Activated CD8-positive, alpha-beta T cell treated with anti-CD3 and anti-CD28 coated beads for 36 hours (primary cell): ENCODE measurements at regions of chr2 and their contacts with region 1.

Region 1: DNA sequence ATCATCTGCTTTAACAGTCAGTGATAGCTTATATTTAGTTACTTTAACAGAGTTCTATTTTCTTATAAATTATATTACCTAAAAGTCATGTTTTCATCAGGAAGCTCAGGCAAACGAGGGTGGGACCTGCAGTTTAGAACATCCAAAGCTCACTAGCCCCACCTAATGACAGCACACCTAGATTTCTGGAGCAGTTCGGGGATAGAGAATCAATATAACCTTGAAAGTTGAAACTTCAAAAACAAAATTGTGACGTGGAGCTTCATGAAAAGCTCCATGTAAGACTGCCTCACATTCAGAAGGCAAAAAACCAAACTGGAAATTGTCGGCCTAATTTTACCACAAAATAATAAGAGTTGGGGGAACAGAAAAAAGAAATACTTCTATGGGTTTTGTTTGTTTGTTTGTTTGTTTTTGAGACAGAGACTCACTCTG is 185.9 kb upstream of the CCDC150 start:
- DNase-seq: peak; percentile 68
- ATAC-seq: peak; percentile 73
- H3K4me3 Mint-ChIP-seq: no peak overlapping the region
- H3K27ac Mint-ChIP-seq: no peak overlapping the region
- H3K4me1 Mint-ChIP-seq: peaks cover 3% of the 10 kb centered on the region
- H3K27me3 Mint-ChIP-seq: peaks cover 17% of the 10 kb centered on the region
- CTCF ChIP-seq: peak; percentile 68

Region 2: DNA sequence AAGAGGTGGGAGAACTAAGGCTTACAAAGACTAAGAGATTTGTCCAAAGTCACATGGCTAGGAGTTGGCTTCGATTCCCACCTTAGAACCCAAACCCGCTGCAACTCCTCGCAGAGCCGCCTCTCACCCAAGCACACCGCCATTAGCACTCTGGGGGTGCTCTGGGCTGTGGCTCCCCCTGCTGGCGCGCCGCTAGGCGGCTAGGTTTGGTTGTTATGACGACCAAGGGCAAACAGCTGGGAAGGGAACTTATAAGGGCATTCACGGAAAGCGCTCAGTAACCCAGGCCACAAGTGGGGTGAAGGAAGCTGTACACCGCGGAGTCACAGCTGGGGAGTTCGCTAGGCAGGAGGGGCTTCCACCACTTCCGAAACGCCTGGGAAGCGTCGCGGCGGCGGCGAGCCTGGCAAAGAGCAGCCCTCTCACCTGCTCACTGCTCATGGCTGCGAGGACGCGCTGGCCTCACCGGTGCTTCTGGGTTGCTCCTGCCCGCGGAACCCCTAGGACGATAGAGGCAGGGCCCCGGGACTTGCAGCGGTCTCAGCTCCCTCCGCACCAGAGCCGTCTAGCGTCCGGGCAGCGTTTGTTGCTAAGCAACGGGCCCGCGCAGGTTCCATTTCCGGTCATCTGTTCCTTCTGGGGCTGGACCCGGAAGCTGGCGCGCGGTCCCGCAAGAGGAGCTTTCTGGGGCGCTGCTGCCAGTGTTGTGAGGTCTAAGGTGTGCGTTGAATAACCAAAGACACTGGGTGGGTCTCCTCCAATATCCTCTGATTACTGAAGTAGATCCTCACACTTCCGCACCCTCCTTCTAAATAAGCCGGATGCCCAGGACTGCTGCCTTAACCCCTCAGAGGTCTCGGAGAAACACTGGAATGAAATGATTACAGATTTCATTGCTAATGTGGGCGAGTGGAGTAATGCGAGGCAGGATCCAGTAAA is 385.1 kb before region 1 on chr2 and contains the start of gene DNAH7:
- CTCF ChIA-PET with region 1: interaction called, 14 read pairs
- POLR2A ChIA-PET with region 1: no interaction called
- intact Hi-C with region 1: no loop called
- DNase-seq: peak; percentile 94
- ATAC-seq: peak; percentile 96
- H3K4me3 Mint-ChIP-seq: peak within 1 kb of the TSS; percentile 78
- H3K27ac Mint-ChIP-seq: peak within 1 kb of the TSS; percentile 62
- H3K4me1 Mint-ChIP-seq: peaks cover 15% of the 10 kb centered on the region
- H3K27me3 Mint-ChIP-seq: peaks cover 3% of the 10 kb centered on the region
- CTCF ChIP-seq: peak; percentile 62
- total RNA-seq, gene DNAH7: 0.07 TPM

Region 3: DNA sequence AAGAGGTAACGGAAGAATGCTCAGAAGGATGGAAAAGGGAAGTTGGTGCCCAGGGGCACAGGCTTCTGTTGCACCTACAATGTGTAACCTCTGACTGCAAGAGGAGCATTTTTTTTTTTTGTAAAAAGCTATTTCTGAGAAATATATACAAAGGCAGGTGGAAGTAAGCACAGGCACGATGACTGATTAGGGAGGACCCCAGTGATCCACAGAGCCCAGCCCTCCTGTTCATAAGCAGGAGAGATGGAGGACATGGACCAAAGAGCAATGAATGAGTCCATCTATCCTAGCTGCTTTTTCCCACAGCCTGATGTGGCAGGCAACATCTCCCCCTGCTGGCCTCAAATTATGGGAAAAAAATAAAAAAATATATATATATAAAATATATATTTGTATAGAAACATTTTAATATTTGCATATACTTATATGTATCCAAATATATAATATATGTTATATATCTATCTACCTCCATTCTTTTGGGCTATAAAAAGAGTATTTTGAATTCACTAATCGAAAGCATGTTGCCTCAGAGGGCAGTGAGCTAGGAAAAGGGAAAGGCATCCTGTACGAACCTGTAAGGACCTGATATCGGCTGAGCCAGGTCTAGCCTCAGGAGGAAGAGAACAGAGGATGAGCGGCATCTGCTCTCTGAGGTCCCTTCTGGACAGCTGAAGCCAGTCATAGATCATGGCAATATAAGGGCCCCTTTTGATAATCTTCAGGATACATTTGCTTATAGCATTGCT is 116.2 kb before region 1 on chr2:
- CTCF ChIA-PET with region 1: interaction called, 31 read pairs
- POLR2A ChIA-PET with region 1: interaction called, 3 read pairs
- intact Hi-C with region 1: loop called (anchors 10 kb)
- DNase-seq: peak; percentile 16
- ATAC-seq: peak; percentile 24
- H3K4me3 Mint-ChIP-seq: no peak overlapping the region
- H3K27ac Mint-ChIP-seq: no peak overlapping the region
- H3K4me1 Mint-ChIP-seq: peaks cover 8% of the 10 kb centered on the region
- H3K27me3 Mint-ChIP-seq: no peaks in the 10 kb centered on the region
- CTCF ChIP-seq: peak; percentile 75

Region 4: DNA sequence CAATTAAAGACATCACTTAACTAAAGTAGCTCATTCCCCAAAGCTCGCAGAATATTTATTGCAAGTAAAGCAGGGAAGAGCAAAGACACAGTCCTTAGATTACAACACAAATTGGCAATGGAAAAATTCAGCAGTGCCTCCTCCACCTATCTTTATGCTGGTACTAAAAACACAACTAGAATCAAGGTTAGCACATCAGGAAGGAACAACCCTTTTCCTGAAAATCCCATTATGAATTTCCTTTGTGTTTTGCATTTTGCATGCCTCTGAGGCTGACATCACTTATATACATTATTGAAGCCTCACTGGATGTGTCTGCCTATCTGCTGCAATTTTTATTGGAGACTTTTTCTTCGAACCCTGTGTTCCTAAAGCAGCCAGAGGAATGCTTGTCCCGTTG is 88.5 kb before region 1 on chr2:
- CTCF ChIA-PET with region 1: interaction called, 10 read pairs
- POLR2A ChIA-PET with region 1: no interaction called
- intact Hi-C with region 1: no loop called
- DNase-seq: no peak
- ATAC-seq: no peak
- H3K4me3 Mint-ChIP-seq: no peak overlapping the region
- H3K27ac Mint-ChIP-seq: no peak overlapping the region
- H3K4me1 Mint-ChIP-seq: peaks cover 9% of the 10 kb centered on the region
- H3K27me3 Mint-ChIP-seq: no peaks in the 10 kb centered on the region
- CTCF ChIP-seq: no peak

Region 5: DNA sequence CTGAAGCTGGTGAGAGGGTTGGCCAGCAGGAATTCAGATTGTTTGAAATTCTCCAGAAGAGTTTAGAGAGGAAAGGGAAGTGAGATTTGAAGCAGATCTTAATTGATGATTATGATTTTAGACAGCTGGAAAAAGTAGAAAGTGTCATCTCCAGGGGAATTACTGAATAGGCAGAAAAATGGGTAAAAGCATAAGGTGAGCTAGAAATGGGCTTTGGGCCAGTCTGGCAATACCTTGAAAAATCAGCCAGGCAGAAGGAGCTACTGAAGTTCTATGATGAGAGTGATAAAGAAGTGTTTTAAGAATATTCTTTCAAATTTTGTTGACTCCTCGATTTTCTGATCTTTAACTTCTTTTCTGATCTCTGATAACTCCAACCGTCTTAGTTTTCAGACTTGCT is 13.0 kb after region 1 on chr2:
- CTCF ChIA-PET with region 1: interaction called, 13 read pairs
- POLR2A ChIA-PET with region 1: interaction called, 3 read pairs
- intact Hi-C with region 1: no loop called
- DNase-seq: no peak
- ATAC-seq: no peak
- H3K4me3 Mint-ChIP-seq: no peak overlapping the region
- H3K27ac Mint-ChIP-seq: no peak overlapping the region
- H3K4me1 Mint-ChIP-seq: no peaks in the 10 kb centered on the region
- H3K27me3 Mint-ChIP-seq: peaks cover 10% of the 10 kb centered on the region
- CTCF ChIP-seq: no peak

Region 6: DNA sequence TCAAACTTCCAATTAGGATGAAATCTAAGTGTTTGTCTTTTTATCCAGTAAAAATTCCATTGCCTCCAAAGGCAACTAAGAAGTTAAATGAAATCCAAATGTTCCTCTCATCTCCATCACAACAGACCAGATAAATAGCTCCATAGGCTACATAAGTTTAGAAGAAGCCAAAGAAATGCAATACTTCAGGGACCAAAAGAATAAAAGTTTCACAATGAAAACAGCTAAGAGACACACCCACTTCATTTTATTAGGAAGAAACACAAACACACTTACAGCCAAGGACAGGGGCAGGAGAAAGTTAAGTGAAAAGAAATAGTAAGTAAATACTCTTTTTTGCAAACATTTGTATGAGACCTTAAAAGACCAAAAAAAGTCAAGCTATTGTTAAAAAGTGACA is 97.4 kb after region 1 on chr2:
- CTCF ChIA-PET with region 1: no interaction called
- POLR2A ChIA-PET with region 1: no interaction called
- intact Hi-C with region 1: no loop called
- DNase-seq: no peak
- ATAC-seq: no peak
- H3K4me3 Mint-ChIP-seq: no peak overlapping the region
- H3K27ac Mint-ChIP-seq: no peak overlapping the region
- H3K4me1 Mint-ChIP-seq: no peaks in the 10 kb centered on the region
- H3K27me3 Mint-ChIP-seq: peaks cover 8% of the 10 kb centered on the region
- CTCF ChIP-seq: no peak

Region 7: GRCh38 chr2:196742685-196743084 is 289.1 kb after region 1 on chr2:
- CTCF ChIA-PET with region 1: no interaction called
- POLR2A ChIA-PET with region 1: no interaction called
- intact Hi-C with region 1: no loop called
- DNase-seq: no peak
- ATAC-seq: no peak
- H3K4me3 Mint-ChIP-seq: no peak overlapping the region
- H3K27ac Mint-ChIP-seq: no peak overlapping the region
- H3K4me1 Mint-ChIP-seq: no peaks in the 10 kb centered on the region
- H3K27me3 Mint-ChIP-seq: no peaks in the 10 kb centered on the region
- CTCF ChIP-seq: no peak